Activated CD4-positive, alpha-beta T cell treated with anti-CD3 and anti-CD28 coated beads, Interleukin-2, amount 10 ng/mL, durations not matched to agents 24 days and 14 days (primary cell): ENCODE measurements at regions of chr9 and their contacts with region 1.

Region 1: DNA sequence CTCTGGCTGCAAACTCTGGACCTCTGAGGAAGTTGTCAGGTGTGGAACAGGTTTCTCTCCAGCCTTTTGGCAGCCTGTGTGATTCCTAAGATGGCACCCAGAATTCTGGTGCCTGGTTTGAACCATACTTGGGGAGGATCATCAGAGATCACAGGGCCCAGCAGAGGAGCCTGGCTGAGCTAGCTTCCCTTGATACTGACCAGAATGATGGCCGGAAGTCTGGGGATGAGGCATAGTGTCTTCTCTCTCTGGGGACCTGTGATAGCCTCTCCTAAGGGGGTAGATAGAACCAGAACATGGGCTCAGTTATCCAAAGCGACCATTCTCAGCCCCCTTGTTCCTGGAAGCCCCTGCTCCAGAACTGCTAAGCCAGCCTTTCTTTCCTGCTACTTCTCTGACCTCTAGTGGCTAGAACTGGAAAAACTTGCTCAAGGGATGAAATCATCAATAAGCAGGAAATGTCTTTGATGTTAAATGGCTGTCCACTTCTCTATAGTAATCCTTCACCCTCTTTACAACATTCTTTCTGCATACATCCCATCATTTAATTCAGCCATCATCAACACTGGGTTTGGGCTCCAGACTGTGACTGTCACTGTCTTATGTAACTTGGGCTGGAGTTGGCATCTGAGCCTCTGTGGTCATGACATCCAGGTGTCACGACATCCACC is 55.1 kb downstream of the C9orf152 start:
- DNase-seq: peak; percentile 84
- H3K4me3 Mint-ChIP-seq: peak overlapping the region; percentile 42
- H3K27ac Mint-ChIP-seq: peak overlapping the region; percentile 74
- H3K4me1 Mint-ChIP-seq: peaks cover 95% of the 10 kb centered on the region
- H3K27me3 Mint-ChIP-seq: no peaks in the 10 kb centered on the region

Region 2: DNA sequence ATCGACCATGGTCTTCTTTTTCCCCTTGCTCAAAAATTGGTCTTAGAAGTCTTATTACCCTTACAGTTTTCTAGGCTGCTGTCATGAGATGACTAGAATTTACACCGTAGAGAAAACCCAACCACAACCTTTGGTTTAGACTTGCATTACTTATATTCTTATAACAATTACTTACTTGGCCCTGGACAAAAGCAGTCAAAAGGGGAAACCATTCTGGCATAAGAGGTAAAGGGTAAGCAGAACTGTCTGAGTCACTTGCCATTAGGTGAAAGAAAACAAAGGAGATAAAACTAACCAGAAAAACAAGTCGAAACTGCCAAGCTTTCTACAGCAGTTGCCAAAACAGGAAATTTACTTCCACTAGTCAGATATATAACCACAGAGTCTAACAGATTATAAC is 1051.0 kb before region 1 on chr9:
- intact Hi-C with region 1: loop called (anchors 10 kb)
- DNase-seq: peak; percentile 75
- H3K4me3 Mint-ChIP-seq: peak overlapping the region; percentile 69
- H3K27ac Mint-ChIP-seq: peak overlapping the region; percentile 89
- H3K4me1 Mint-ChIP-seq: peaks cover 53% of the 10 kb centered on the region
- H3K27me3 Mint-ChIP-seq: no peaks in the 10 kb centered on the region

Region 3: GRCh38 chr9:109579191-109579948 is 573.5 kb before region 1 on chr9:
- intact Hi-C with region 1: loop called (anchors 5 kb)
- DNase-seq: no peak
- H3K4me3 Mint-ChIP-seq: no peak overlapping the region
- H3K27ac Mint-ChIP-seq: no peak overlapping the region
- H3K4me1 Mint-ChIP-seq: no peaks in the 10 kb centered on the region
- H3K27me3 Mint-ChIP-seq: peaks cover 11% of the 10 kb centered on the region

Region 4: GRCh38 chr9:109894921-109895758 is 257.7 kb before region 1 on chr9:
- intact Hi-C with region 1: loop called (anchors 1 kb)
- DNase-seq: peak; percentile 80
- H3K4me3 Mint-ChIP-seq: peak overlapping the region; percentile 56
- H3K27ac Mint-ChIP-seq: peak overlapping the region; percentile 92
- H3K4me1 Mint-ChIP-seq: peaks cover 53% of the 10 kb centered on the region
- H3K27me3 Mint-ChIP-seq: no peaks in the 10 kb centered on the region

Region 5: DNA sequence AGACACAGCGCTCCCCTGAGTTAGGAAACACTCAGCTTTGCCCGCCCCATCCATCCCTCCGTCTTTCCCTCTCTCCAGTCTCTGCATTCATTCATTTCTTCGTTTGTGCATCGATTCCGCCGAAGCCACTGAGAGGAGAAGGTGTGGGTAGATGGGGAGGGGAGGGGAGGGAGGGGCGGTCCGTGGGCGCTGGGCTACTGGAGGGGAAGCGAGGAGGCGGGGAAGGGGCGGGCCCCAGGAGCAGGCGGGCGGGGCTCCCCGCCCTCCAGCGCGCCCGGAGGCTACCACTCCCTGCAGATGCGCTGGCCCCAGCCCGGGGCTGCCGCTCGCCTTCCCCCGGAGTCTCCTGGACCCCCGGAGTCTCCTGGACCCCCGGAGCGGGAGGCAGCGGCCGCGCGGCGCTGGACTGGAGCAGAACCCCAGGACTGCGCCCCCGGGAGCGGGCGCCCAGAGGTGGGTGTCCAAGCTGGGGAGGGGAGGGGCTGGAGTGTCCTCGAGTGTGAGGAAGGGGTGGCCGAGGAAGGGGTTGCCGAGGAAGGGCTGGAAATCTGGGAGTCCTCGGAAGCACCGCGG is 104.3 kb before region 1 on chr9:
- intact Hi-C with region 1: loop called (anchors 1 kb)
- DNase-seq: peak; percentile 95
- H3K4me3 Mint-ChIP-seq: peak overlapping the region; percentile 98
- H3K27ac Mint-ChIP-seq: peak overlapping the region; percentile 93
- H3K4me1 Mint-ChIP-seq: peaks cover 40% of the 10 kb centered on the region
- H3K27me3 Mint-ChIP-seq: peaks cover 8% of the 10 kb centered on the region

Region 6: DNA sequence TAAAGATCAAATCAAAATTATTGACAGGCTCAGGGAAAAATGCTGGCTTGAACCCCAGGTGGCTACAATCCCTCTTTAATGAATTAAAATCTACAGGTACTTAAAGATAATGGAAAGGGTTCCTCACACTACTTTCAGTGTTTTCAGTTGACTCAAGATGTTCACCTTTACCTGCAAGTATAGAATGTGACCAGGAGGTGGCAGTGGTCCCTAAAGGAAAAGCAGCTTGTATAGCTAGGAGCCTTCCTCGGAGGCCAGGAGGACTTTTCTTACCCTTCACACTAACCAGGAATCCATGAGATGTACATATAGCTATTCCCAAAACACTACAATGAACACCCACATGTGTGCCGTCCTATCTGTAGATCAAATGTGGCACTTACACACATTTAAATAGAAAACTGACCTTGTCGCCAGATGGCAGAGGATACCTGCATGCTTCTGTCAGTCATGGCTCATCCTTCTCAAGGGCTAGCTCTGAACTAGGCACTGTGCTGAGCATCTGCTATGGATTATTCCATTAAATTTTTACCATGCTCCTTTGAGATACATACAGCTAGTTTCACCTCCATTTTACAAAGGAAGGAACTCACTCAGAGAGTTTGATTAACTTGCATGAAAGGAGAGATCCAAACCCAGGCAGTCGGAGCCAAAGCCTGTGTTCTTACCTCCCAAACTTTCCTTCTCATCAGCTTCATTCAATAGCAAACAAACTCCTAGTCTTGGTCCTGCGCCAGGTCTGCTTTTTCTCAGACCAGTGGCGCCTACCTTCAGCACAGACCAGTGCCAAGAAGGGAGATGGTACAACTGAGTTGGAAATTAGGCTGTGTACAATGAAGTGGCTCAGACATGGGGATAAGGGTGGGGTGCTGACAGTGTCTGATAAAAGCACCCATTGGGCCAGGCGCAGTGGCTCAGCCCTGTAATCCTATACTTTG is 30.6 kb after region 1 on chr9:
- intact Hi-C with region 1: no loop called
- DNase-seq: peak; percentile 88
- H3K4me3 Mint-ChIP-seq: no peak overlapping the region
- H3K27ac Mint-ChIP-seq: no peak overlapping the region
- H3K4me1 Mint-ChIP-seq: peaks cover 13% of the 10 kb centered on the region
- H3K27me3 Mint-ChIP-seq: peaks cover 5% of the 10 kb centered on the region